ENCODE measurements at regions of chr3 and their contacts with region 1.

Region 1: GRCh38 chr3:188788621-188789081 is 383.1 kb upstream of the TPRG1 start:
- DNase-seq: peak; percentile 49
- H3K4me3 Mint-ChIP-seq: no peak overlapping the region
- H3K27ac Mint-ChIP-seq: no peak overlapping the region
- H3K4me1 Mint-ChIP-seq: peaks cover 6% of the 10 kb centered on the region
- H3K27me3 Mint-ChIP-seq: peaks cover 8% of the 10 kb centered on the region

Region 2: GRCh38 chr3:188061133-188061532 is 727.5 kb before region 1 on chr3:
- intact Hi-C with region 1: loop called (anchors 1 kb)
- DNase-seq: peak; percentile 38
- H3K4me3 Mint-ChIP-seq: peak overlapping the region; percentile 61
- H3K27ac Mint-ChIP-seq: peak overlapping the region; percentile 87
- H3K4me1 Mint-ChIP-seq: peaks cover 53% of the 10 kb centered on the region
- H3K27me3 Mint-ChIP-seq: no peaks in the 10 kb centered on the region

Region 3: GRCh38 chr3:188294823-188295487 is 493.7 kb before region 1 on chr3:
- intact Hi-C with region 1: loop called (anchors 1 kb)
- DNase-seq: no peak
- H3K4me3 Mint-ChIP-seq: no peak overlapping the region
- H3K27ac Mint-ChIP-seq: peak overlapping the region; percentile 33
- H3K4me1 Mint-ChIP-seq: peaks cover 86% of the 10 kb centered on the region
- H3K27me3 Mint-ChIP-seq: no peaks in the 10 kb centered on the region

Region 4: GRCh38 chr3:188389711-188390342 is 398.8 kb before region 1 on chr3:
- intact Hi-C with region 1: loop called (anchors 1 kb)
- DNase-seq: peak; percentile 33
- H3K4me3 Mint-ChIP-seq: peak overlapping the region; percentile 25
- H3K27ac Mint-ChIP-seq: peak overlapping the region; percentile 86
- H3K4me1 Mint-ChIP-seq: peaks cover 44% of the 10 kb centered on the region
- H3K27me3 Mint-ChIP-seq: peaks cover 1% of the 10 kb centered on the region

Region 5: GRCh38 chr3:188546835-188547670 is 241.6 kb before region 1 on chr3:
- intact Hi-C with region 1: no loop called
- DNase-seq: no peak
- H3K4me3 Mint-ChIP-seq: no peak overlapping the region
- H3K27ac Mint-ChIP-seq: no peak overlapping the region
- H3K4me1 Mint-ChIP-seq: no peaks in the 10 kb centered on the region
- H3K27me3 Mint-ChIP-seq: no peaks in the 10 kb centered on the region

Region 6: DNA sequence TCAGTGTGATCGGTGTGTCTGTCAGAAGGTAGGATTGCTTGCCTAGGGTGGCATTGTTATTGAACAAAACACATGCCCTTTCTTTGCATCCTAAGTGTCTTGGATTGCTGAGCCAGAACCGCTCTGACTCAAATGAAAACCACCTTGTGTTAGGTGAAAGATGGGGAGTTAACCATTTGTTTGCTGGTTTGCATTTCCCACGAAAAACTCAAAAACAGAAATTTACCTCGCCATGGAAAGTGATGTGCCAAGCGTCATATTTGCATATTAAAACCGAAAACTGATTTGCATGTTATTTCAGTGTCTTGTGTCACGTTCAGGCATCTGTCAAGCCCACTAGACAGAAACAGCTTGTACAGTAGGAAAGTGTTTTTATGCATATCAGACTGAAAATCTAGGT is 91.5 kb before region 1 on chr3:
- intact Hi-C with region 1: loop called (anchors 1 kb)
- DNase-seq: no peak
- H3K4me3 Mint-ChIP-seq: no peak overlapping the region
- H3K27ac Mint-ChIP-seq: peak overlapping the region; percentile 18
- H3K4me1 Mint-ChIP-seq: peaks cover 36% of the 10 kb centered on the region
- H3K27me3 Mint-ChIP-seq: peaks cover 5% of the 10 kb centered on the region

Region 7: DNA sequence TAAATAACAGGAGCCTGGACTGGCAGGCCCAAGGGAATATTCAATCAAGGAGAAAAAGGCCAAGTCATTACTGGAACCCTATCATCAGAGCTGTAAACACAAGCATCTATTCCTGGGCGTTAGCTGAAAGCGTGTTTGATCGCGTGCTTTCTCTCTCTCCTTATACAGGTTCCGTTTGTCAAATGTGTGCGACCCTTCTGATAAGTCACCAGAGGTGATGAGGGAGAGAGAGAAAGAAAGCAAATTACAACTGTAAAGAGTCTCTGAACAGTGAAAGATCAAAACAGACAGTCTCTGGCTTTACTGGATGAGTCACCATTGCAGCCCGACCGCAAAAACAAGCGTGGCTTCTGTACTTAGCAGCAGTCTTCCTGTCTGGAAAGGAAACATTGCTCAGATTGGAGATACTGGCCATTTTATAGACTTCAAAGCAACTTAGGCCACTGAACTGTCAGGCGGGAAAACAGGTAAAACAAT is 343.6 kb after region 1 on chr3:
- intact Hi-C with region 1: loop called (anchors 1 kb)
- DNase-seq: peak; percentile 75
- H3K4me3 Mint-ChIP-seq: peak overlapping the region; percentile 69
- H3K27ac Mint-ChIP-seq: peak overlapping the region; percentile 76
- H3K4me1 Mint-ChIP-seq: peaks cover 28% of the 10 kb centered on the region
- H3K27me3 Mint-ChIP-seq: no peaks in the 10 kb centered on the region